ENCODE measurements at regions of chr3 and their contacts with region 1.

Region 1: GRCh38 chr3:40179016-40179415 is 130.5 kb upstream of the EIF1B start:
- DNase-seq: peak; percentile 56 to 95 (median 88)

Region 2: DNA sequence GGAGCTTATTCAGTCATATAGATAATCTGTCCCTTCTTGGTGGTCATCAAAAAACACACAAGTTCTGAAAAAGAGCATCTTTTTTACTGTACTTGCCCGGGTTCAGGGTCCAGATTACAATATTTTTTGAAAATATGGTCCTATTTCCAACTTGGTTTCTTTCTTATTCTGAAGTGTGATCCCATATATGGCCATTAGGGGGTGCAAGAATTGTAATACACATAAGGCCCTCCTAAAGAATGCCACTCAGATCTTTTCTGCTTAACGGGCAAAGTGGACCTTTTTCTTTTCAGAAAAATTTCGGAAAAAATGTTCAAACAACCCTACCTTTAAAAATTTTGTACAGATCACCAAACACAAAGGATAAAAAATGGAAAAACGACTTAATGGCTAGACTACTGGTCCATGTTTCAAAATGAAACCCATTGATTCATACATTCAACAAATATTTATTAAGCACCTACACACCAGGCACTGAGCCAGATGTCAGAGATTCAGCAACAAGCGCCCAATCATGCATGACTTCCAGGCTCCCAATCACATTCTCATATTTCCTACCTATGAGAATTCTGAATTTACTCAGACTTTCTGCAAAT is 471.6 kb before region 1 on chr3:
- intact Hi-C with region 1: loop called (anchors 5 kb)
- DNase-seq: peak in 3 of 42 donors; percentile 2 to 21 (median 9)

Region 3: GRCh38 chr3:39724233-39724846 is 454.7 kb before region 1 on chr3:
- intact Hi-C with region 1: loop called (anchors 5 kb)
- DNase-seq: peak in 3 of 42 donors; percentile 8 to 30 (median 26)

Region 4: GRCh38 chr3:40043444-40043755 is 135.6 kb before region 1 on chr3:
- intact Hi-C with region 1: no loop called
- DNase-seq: peak in 11 of 42 donors; percentile 3 to 51 (median 19)

Measured in head of caudate nucleus (tissue), 42 donors.